Heart left ventricle (tissue), 16 donors: ENCODE measurements at regions of chr16 and their contacts with region 1.

Region 1: GRCh38 chr16:57863434-57864160 is 61.3 kb upstream of the KIFC3 start:
- DNase-seq: peak in 4 of 5 donors; percentile 61 to 71 (median 64)
- ATAC-seq: peak; percentile 89 to 93 (median 92)
- H3K4me3 ChIP-seq: no peak overlapping the region
- H3K27ac ChIP-seq: peak overlapping the region in 4 of 12 donors; percentile 6 to 58 (median 18)
- H3K4me1 ChIP-seq: peaks cover 0 to 25% (median 8%) of the 10 kb centered on the region in 12 donors
- H3K27me3 ChIP-seq: no peaks in the 10 kb centered on the region
- CTCF ChIP-seq: peak; percentile 39 to 84 (median 71)
- POLR2A ChIP-seq: no peak

Region 2: DNA sequence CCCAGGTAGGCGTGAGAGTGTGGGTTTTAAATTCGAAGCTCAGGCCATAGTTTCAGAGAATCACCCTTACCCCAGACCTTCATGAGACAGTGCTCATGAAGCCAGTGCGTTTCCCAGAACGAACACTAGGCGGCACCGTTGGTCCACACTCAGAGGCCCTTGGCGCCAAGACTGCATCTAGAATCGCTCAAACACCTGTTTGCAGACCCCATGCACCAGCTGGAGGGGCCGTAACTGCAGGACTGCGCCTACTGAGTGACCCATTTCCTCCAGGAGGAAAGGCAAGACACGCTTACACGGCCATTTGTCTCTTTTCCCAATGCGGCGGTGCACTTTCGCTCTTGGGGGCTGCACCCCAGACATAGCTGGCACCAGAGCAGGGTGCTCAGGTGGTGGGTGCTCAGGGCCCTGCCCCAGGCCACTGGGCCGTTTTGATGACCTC is 287.1 kb before region 1 on chr16:
- intact Hi-C with region 1: loop called in 3 of 10 experiments (anchors 5 to 10 kb)
- DNase-seq: peak; percentile 56 to 83 (median 68)
- ATAC-seq: peak; percentile 56 to 81 (median 78)
- H3K4me3 ChIP-seq: no peak overlapping the region
- H3K27ac ChIP-seq: peak overlapping the region in 1 of 12 donors; percentile 75
- H3K4me1 ChIP-seq: peaks cover 0 to 4% (median 0%) of the 10 kb centered on the region in 12 donors
- H3K27me3 ChIP-seq: peaks cover 0 to 17% (median 0%) of the 10 kb centered on the region in 9 donors
- CTCF ChIP-seq: peak; percentile 86 to 96 (median 93)
- POLR2A ChIP-seq: no peak

Region 3: GRCh38 chr16:57757326-57757786 is 106.2 kb before region 1 on chr16:
- intact Hi-C with region 1: loop called (anchors 1 to 2 kb)
- DNase-seq: peak; percentile 89 to 96 (median 89)
- ATAC-seq: peak; percentile 82 to 90 (median 84)
- H3K4me3 ChIP-seq: no peak overlapping the region
- H3K27ac ChIP-seq: peak overlapping the region in 11 of 12 donors; percentile 50 to 81 (median 73)
- H3K4me1 ChIP-seq: peaks cover 0 to 29% (median 14%) of the 10 kb centered on the region in 12 donors
- H3K27me3 ChIP-seq: no peaks in the 10 kb centered on the region
- CTCF ChIP-seq: peak in 11 of 12 donors; percentile 95 to 99 (median 98)
- POLR2A ChIP-seq: no peak

Region 4: DNA sequence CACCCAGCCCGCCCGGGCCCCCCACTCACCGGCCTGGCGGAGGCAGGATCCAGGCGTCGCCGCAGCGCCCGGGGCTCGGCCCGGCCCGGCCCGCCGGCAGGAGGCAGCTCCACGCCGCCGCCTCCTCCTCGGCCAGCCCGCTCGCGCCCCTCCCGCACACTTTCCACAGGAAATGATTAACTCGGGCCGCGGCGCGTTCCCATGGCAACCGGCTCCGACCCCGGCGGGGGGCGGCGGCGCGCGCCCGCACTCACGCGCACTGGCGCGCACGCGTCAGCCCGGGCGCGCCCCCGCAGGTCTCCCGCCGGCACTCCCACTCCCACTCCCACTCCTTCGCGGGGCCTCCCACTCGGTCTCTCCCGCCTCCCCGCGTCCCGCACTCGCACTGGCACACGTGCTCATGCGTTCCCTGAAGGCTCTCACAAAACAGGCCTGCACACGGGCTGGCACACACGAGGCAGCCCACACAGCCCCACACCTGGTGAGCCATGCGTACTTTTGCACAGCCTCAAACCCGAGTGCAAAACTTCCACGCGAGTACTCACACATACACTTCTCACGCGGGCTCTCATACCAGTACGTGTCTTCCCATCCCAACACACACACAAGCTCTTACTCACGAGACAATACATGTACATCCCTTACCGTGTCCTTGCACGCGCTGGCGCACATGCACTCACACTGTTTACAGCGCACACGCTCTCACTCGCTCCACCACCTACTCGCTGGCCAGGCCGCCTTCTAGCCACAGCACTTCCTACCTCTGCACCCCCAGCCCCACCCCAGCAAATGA is 61.1 kb before region 1 on chr16 and contains the start of gene KIFC3:
- intact Hi-C with region 1: loop called (anchors 2 to 10 kb)
- DNase-seq: peak; percentile 91 to 94 (median 92)
- ATAC-seq: peak in 3 of 4 donors; percentile 27 to 56 (median 47)
- H3K4me3 ChIP-seq: peak within 1 kb of the TSS; percentile 49 to 91 (median 72)
- H3K27ac ChIP-seq: peak within 1 kb of the TSS; percentile 67 to 99 (median 95)
- H3K4me1 ChIP-seq: peaks cover 6 to 88% (median 61%) of the 10 kb centered on the region in 12 donors
- H3K27me3 ChIP-seq: no peaks in the 10 kb centered on the region
- CTCF ChIP-seq: peak in 8 of 12 donors; percentile 20 to 58 (median 41)
- POLR2A ChIP-seq: no peak
- total RNA-seq, gene KIFC3: 46.1 to 105 (median 66.8) TPM

Region 5: GRCh38 chr16:57816334-57816745 is 47.3 kb before region 1 on chr16:
- intact Hi-C with region 1: loop called in 2 of 10 experiments (anchors 5 kb)
- DNase-seq: peak; percentile 86 to 97 (median 92)
- ATAC-seq: peak; percentile 94 to 98 (median 98)
- H3K4me3 ChIP-seq: no peak overlapping the region
- H3K27ac ChIP-seq: peak overlapping the region; percentile 16 to 90 (median 86)
- H3K4me1 ChIP-seq: peaks cover 7 to 21% (median 17%) of the 10 kb centered on the region in 12 donors
- H3K27me3 ChIP-seq: no peaks in the 10 kb centered on the region
- CTCF ChIP-seq: no peak
- POLR2A ChIP-seq: peak in 1 of 2 donors; percentile 32